AG04449 (cell line): ENCODE measurements at regions of chr19 and their contacts with region 1.

Region 1: GRCh38 chr19:55611983-55612645 is 6.7 kb downstream of the ZNF865 start:
- DNase-seq: no peak
- H3K4me3 ChIP-seq: no peak overlapping the region
- CTCF ChIP-seq: no peak

Region 2: DNA sequence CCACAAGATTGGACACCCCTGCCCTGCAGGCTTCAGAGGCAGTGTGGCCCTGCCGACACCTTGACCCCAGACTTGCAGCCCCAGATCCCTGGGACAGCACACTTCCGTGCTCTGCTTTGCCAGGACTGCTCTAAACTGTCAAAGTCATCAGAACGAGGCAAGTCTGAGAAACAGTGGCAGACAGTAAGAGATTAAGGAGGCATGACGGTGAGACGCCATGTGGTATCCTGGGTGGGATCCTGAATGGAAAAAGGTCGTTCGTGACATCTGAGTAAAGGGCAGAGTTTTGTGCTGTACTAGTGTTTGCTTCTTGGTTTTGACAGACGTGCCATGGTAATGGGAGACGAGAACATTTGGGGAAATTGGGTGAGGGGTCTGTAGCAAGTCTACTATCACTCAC is 45.3 kb before region 1 on chr19:
- CTCF ChIA-PET with region 1: no interaction called
- POLR2A ChIA-PET with region 1: no interaction called
- DNase-seq: no peak
- H3K4me3 ChIP-seq: no peak overlapping the region
- CTCF ChIP-seq: no peak

Region 3: DNA sequence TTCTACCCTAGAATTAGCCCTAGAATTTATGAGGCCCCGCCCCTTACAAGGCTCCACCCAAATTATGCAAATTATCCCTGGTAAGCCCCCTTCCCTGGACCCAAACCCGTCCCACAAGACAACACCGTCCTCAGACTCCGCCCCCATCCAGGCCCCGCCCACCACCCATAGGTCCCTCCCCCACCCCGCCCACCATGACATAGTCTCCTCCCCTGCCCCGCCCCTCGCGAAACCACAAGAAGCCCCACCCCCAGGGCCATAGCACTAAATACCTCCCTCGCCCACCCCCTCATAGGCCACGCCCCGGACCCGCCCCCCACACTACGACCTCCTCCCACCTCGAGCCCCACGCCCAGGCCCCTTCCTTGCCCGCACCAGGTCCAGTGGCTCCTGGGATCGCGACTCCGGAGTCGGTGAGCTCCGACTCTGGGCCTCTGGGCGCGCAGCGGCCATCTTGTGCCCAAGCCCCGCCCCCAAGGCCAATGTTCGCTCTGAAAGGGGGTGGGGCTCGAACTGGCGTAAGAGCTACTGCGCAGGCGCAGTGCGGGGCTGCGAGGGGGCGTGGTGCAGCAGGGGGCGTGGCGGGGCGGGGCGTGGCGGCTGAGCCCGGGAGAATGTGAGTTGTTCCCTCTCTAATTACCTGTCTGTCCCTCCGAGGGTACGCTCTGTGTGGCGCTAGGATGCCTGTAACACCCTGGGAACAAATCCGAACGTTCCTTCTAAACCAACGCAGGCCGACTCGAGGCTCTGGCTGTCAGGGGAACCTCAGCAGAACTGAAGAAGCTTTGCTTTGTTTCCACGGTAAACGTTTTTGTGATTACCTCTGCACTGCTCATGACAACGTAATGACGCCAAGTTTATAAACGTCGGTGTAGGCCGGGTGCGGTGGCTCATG is 12.2 kb after region 1 on chr19 and contains the start of gene ZNF784:
- CTCF ChIA-PET with region 1: interaction called, 43 read pairs
- POLR2A ChIA-PET with region 1: interaction called, 4 read pairs
- DNase-seq: no peak
- H3K4me3 ChIP-seq: peak within 1 kb of the TSS; percentile 78
- CTCF ChIP-seq: no peak